ENCODE measurements at regions of chr11 and their contacts with region 1.

Region 1: GRCh38 chr11:78188286-78189173 is at the starts of genes KCTD21 and USP35:
- DNase-seq: peak; percentile 96
- ATAC-seq: peak; percentile 85
- H3K4me3 Mint-ChIP-seq: peak within 1 kb of the TSS; percentile 84
- H3K27ac Mint-ChIP-seq: peak within 1 kb of the TSS; percentile 97
- H3K4me1 Mint-ChIP-seq: peaks cover 57% of the 10 kb centered on the region
- H3K27me3 Mint-ChIP-seq: no peaks in the 10 kb centered on the region
- total RNA-seq, gene KCTD21: 9.0 to 9.8 TPM
- total RNA-seq, gene USP35: 9.2 to 9.8 TPM

Region 2: GRCh38 chr11:77637345-77638165 is 551.0 kb before region 1 on chr11 and contains the start of gene CLNS1A:
- CTCF ChIA-PET with region 1: no interaction called
- POLR2A ChIA-PET with region 1: no interaction called
- intact Hi-C with region 1: loop called in 1 of 2 experiments (anchors 1 kb)
- DNase-seq: peak; percentile 91
- ATAC-seq: peak; percentile 98
- H3K4me3 Mint-ChIP-seq: peak within 1 kb of the TSS; percentile 85
- H3K27ac Mint-ChIP-seq: peak within 1 kb of the TSS; percentile 94
- H3K4me1 Mint-ChIP-seq: peaks cover 40% of the 10 kb centered on the region
- H3K27me3 Mint-ChIP-seq: no peaks in the 10 kb centered on the region
- total RNA-seq, gene CLNS1A: 185 to 212 TPM

Region 3: GRCh38 chr11:77876045-77876444 is 312.5 kb before region 1 on chr11:
- CTCF ChIA-PET with region 1: no interaction called
- POLR2A ChIA-PET with region 1: no interaction called
- intact Hi-C with region 1: no loop called
- DNase-seq: no peak
- ATAC-seq: no peak
- H3K4me3 Mint-ChIP-seq: no peak overlapping the region
- H3K27ac Mint-ChIP-seq: no peak overlapping the region
- H3K4me1 Mint-ChIP-seq: no peaks in the 10 kb centered on the region
- H3K27me3 Mint-ChIP-seq: no peaks in the 10 kb centered on the region

Region 4: DNA sequence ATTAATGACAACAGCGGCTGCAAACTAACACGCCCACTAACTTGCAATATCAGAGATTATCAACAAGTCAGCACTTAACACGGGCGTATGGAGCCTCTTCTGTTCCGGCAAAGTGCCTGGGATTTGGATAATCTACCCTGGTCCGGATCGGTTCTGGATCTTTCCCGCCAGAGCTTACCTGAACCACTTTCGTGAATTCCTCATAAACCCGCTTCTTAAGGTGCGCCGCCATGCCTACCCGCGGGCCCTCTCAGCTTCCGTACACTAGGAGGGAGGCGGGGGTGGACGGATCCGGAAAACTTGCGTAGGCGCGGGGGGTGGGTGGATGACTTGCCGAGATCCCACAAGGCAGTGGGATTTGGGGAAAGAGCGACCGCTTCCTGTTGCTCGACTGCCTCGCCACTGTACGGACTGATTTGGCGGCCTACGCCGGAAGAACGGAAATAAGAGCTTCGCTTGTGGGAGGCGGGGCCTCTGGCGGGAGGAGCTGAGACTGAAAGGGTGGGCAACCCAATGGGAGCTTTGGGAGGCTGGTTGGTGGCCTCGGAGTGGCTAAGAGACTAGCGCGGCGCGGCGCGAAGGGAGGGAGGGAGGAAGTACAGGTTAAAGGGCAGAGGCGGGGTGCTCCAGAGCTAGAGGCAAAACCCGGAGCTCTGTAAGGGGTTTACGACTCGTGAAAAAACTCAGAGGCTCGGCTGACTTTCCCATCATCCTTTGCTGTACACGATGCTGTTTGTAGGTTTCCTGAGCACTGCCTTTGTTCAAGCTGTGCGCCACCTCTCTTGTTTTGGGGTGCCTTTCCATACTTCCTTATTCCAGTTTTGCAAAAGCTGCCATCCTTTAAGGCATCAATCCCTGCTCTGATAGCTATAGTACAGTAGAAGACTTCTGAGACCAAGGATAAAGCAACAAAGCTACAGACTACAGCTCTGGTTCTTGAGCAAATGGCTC is 193.8 kb before region 1 on chr11 and contains the start of gene INTS4:
- CTCF ChIA-PET with region 1: no interaction called
- POLR2A ChIA-PET with region 1: interaction called, 8 read pairs
- intact Hi-C with region 1: loop called (anchors 1 to 2 kb)
- DNase-seq: peak; percentile 99
- ATAC-seq: peak; percentile 99
- H3K4me3 Mint-ChIP-seq: peak within 1 kb of the TSS; percentile 86
- H3K27ac Mint-ChIP-seq: peak within 1 kb of the TSS; percentile 97
- H3K4me1 Mint-ChIP-seq: peaks cover 29% of the 10 kb centered on the region
- H3K27me3 Mint-ChIP-seq: no peaks in the 10 kb centered on the region
- total RNA-seq, gene INTS4: 53.8 to 55.4 TPM

Region 5: GRCh38 chr11:78139422-78140391 is 48.8 kb before region 1 on chr11 and contains the start of gene ALG8:
- CTCF ChIA-PET with region 1: interaction called, 9 read pairs
- POLR2A ChIA-PET with region 1: interaction called, 5 read pairs
- intact Hi-C with region 1: loop called (anchors 1 kb)
- DNase-seq: peak; percentile 98
- ATAC-seq: peak; percentile 93
- H3K4me3 Mint-ChIP-seq: peak within 1 kb of the TSS; percentile 86
- H3K27ac Mint-ChIP-seq: peak within 1 kb of the TSS; percentile 95
- H3K4me1 Mint-ChIP-seq: peaks cover 32% of the 10 kb centered on the region
- H3K27me3 Mint-ChIP-seq: no peaks in the 10 kb centered on the region
- total RNA-seq, gene ALG8: 59.4 to 85.2 TPM

Region 6: DNA sequence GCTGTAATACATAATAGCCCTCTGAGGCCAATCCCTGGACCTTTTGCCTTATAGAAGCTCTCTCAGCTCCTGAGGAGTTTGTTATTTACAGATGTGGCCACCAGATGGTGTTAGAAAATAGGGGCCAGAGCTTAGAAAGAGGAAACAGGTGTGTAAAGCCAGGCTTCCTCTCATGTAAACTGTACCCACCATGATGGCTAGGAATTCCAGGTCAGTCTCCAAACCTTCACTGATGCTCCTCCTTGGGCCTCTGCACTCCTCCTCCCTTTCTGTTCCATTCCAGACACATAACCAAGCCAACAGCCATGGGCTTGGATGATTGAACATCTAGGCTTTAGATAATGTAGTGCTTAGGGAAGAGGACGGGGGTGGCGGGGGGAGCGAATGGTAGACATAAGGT is 39.9 kb after region 1 on chr11:
- CTCF ChIA-PET with region 1: interaction called, 10 read pairs
- POLR2A ChIA-PET with region 1: no interaction called
- intact Hi-C with region 1: loop called in 1 of 2 experiments (anchors 1 kb)
- DNase-seq: no peak
- ATAC-seq: no peak
- H3K4me3 Mint-ChIP-seq: no peak overlapping the region
- H3K27ac Mint-ChIP-seq: no peak overlapping the region
- H3K4me1 Mint-ChIP-seq: peaks cover 26% of the 10 kb centered on the region
- H3K27me3 Mint-ChIP-seq: no peaks in the 10 kb centered on the region

Region 7: GRCh38 chr11:78564490-78565467 is 376.2 kb after region 1 on chr11:
- CTCF ChIA-PET with region 1: interaction called, 3 read pairs
- POLR2A ChIA-PET with region 1: no interaction called
- intact Hi-C with region 1: loop called in 1 of 2 experiments (anchors 2 kb)
- DNase-seq: peak; percentile 43
- ATAC-seq: peak; percentile 61
- H3K4me3 Mint-ChIP-seq: no peak overlapping the region
- H3K27ac Mint-ChIP-seq: peak overlapping the region; percentile 59
- H3K4me1 Mint-ChIP-seq: peaks cover 31% of the 10 kb centered on the region
- H3K27me3 Mint-ChIP-seq: no peaks in the 10 kb centered on the region

Region 8: GRCh38 chr11:79440441-79441194 is 1252.1 kb after region 1 on chr11 and contains the start of gene TENM4:
- CTCF ChIA-PET with region 1: no interaction called
- POLR2A ChIA-PET with region 1: no interaction called
- intact Hi-C with region 1: no loop called
- DNase-seq: peak; percentile 33
- ATAC-seq: peak; percentile 33
- H3K4me3 Mint-ChIP-seq: peak within 1 kb of the TSS; percentile 1
- H3K27ac Mint-ChIP-seq: no peak within 1 kb of the TSS
- H3K4me1 Mint-ChIP-seq: peaks cover 15% of the 10 kb centered on the region
- H3K27me3 Mint-ChIP-seq: peaks cover 52% of the 10 kb centered on the region
- total RNA-seq, gene TENM4: not detected

Region 9: DNA sequence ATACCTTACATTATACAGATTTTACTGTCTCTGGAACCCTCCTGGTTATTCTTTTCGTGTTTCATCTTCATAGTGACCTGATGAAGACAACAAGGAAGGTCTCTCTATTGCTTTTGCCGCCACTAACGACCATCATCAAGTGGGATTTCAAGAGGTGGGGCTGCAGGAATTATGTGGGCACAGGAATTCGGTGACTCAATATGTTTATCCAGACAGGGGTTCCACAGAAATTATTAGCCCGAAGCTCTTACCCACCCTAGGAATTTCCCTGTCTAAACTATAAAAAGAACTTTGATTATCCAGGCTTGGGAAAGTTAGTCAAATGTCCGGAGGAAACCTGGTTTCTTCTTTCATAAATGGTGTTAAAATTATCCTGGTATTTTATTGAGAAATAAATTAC is 1819.1 kb after region 1 on chr11:
- CTCF ChIA-PET with region 1: no interaction called
- POLR2A ChIA-PET with region 1: no interaction called
- intact Hi-C with region 1: no loop called
- DNase-seq: no peak
- ATAC-seq: no peak
- H3K4me3 Mint-ChIP-seq: no peak overlapping the region
- H3K27ac Mint-ChIP-seq: no peak overlapping the region
- H3K4me1 Mint-ChIP-seq: no peaks in the 10 kb centered on the region
- H3K27me3 Mint-ChIP-seq: no peaks in the 10 kb centered on the region

Measured in activated CD4-positive, alpha-beta T cell treated with anti-CD3 and anti-CD28 coated beads for 36 hours (primary cell).